Cardiac septum (tissue), 1 donor: ENCODE measurements at regions of chr7 and their contacts with region 1.

Region 1: DNA sequence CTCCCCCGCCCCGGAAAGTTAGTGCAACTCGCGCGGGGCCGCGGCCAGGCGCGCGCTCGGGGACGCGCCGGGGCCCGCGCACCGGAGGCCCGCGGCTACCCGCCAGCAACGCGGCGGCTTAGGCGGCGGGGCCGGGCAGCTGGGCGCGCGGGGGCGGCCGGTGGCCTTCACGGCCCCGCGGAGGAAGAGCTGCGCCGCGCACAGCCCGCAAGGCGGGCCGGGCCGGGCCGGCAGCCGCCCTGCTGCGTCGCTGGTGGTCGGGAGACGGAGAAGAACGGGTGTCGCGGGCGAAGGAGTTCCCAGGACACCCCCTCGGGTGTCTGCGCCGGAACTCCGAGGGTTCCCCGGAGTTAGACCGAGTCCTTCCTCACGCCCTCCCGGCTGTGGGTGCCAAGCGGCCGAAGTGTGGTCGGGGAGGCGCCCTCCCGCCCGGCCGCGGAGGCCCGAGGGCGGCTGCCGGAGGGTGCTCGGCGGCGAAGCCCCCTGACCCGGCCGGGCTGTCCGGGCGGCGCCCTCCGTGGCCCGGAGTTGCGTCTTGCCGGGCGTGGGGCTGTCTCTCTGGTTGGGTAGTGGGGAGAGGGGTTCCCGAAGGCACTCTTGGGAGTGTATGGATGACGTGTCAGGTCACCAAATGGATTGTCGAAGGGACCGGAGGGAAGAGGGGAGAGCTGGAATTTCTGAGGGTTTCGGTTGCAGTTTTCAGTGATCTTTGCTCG is 584 bp downstream of the ST7 start:
- DNase-seq: peak; percentile 76

Region 2: DNA sequence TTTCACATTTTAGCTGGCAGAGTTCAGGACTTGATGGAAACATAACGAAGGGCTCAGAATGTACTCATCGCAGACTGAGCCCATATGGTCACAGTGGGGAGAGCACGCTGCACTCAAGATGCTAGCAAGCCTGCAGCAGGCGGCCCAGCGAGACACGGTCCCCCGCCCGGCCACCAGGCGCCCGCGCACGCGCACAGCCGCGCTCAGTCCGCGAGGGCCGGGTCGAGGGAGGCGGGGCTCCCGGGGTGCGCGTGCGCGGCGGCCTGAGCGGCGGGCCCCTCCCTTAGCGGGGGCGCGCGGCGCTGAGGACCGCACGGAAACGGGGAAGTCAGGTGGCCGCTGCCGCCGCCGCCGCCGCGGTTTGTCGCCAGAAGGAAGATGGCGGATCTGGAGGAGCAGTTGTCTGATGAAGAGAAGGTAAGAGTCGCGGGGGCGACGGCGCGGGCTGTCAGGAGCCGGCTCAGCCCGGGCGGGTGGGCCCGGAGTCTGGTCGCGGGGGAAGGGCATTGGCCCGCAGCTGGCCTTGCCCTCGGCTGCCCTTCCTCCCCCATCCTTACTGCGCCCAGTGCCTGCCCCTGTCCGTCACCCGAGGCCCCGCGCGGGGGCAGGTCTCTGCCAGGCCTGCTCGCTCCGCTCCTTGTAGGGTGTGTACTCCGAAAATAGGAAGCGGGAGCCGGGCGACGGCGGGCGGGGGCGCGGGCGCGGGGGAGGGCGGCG is 91.5 kb before region 1 on chr7 and contains the start of gene CAPZA2:
- intact Hi-C with region 1: no loop called
- DNase-seq: peak; percentile 97
- total RNA-seq, gene CAPZA2: 313 TPM

Region 3: GRCh38 chr7:117014673-117015133 is 60.8 kb after region 1 on chr7:
- intact Hi-C with region 1: loop called (anchors 5 kb)
- DNase-seq: peak; percentile 79